ENCODE measurements at regions of chr2 and their contacts with region 1.

Region 1: GRCh38 chr2:231104115-231104713 is 20.6 kb downstream of the HTR2B start:
- DNase-seq: peak; percentile 69 to 86 (median 80)
- H3K4me3 ChIP-seq: no peak overlapping the region
- H3K27ac ChIP-seq: no peak overlapping the region
- H3K4me1 ChIP-seq: no peaks in the 10 kb centered on the region
- H3K27me3 ChIP-seq: no peaks in the 10 kb centered on the region

Region 2: GRCh38 chr2:231452799-231453508 is 348.7 kb after region 1 on chr2:
- CTCF ChIA-PET with region 1: interaction called, 49 read pairs
- POLR2A ChIA-PET with region 1: interaction called, 12 read pairs
- DNase-seq: peak in 2 of 3 donors; percentile 20 to 24
- H3K4me3 ChIP-seq: no peak overlapping the region
- H3K27ac ChIP-seq: no peak overlapping the region
- H3K4me1 ChIP-seq: peaks cover 0 to 2% (median 0%) of the 10 kb centered on the region in 4 experiments
- H3K27me3 ChIP-seq: no peaks in the 10 kb centered on the region

Region 3: GRCh38 chr2:231732604-231733003 is 628.4 kb after region 1 on chr2:
- CTCF ChIA-PET with region 1: no interaction called
- POLR2A ChIA-PET with region 1: no interaction called
- DNase-seq: no peak
- H3K4me3 ChIP-seq: no peak overlapping the region
- H3K27ac ChIP-seq: no peak overlapping the region
- H3K4me1 ChIP-seq: no peaks in the 10 kb centered on the region
- H3K27me3 ChIP-seq: no peaks in the 10 kb centered on the region